Natural killer cell (primary cell): ENCODE measurements at regions of chr1 and their contacts with region 1.

Region 1: GRCh38 chr1:154558575-154559465 is at the start of gene UBE2Q1:
- DNase-seq: peak; percentile 99 to 100
- ATAC-seq: peak; percentile 86 to 94 (median 90)
- H3K4me3 ChIP-seq: peak within 1 kb of the TSS; percentile 78
- H3K4me3 Mint-ChIP-seq: peak within 1 kb of the TSS; percentile 92
- H3K27ac ChIP-seq: peak within 1 kb of the TSS; percentile 84
- H3K27ac Mint-ChIP-seq: peak within 1 kb of the TSS; percentile 83 to 97
- H3K4me1 ChIP-seq: peaks cover 28% of the 10 kb centered on the region
- H3K4me1 Mint-ChIP-seq: peaks cover 38 to 48% of the 10 kb centered on the region in 2 donors
- H3K27me3 ChIP-seq: no peaks in the 10 kb centered on the region
- H3K27me3 Mint-ChIP-seq: no peaks in the 10 kb centered on the region
- CTCF ChIP-seq: no peak
- total RNA-seq, gene UBE2Q1: 100 to 137 (median 112) TPM

Region 2: GRCh38 chr1:154304664-154305337 is 254.0 kb before region 1 on chr1:
- intact Hi-C with region 1: no loop called
- DNase-seq: no peak
- ATAC-seq: no peak
- H3K4me3 ChIP-seq: no peak overlapping the region
- H3K4me3 Mint-ChIP-seq: no peak overlapping the region
- H3K27ac ChIP-seq: no peak overlapping the region
- H3K27ac Mint-ChIP-seq: no peak overlapping the region
- H3K4me1 ChIP-seq: no peaks in the 10 kb centered on the region
- H3K4me1 Mint-ChIP-seq: no peaks in the 10 kb centered on the region
- H3K27me3 ChIP-seq: no peaks in the 10 kb centered on the region
- H3K27me3 Mint-ChIP-seq: peaks cover 0 to 2% of the 10 kb centered on the region in 2 donors
- CTCF ChIP-seq: no peak

Region 3: GRCh38 chr1:154607609-154608396 is 49.0 kb after region 1 on chr1 and contains the start of gene ADAR:
- intact Hi-C with region 1: loop called (anchors 1 kb)
- DNase-seq: peak; percentile 84 to 97
- ATAC-seq: peak; percentile 89 to 95 (median 90)
- H3K4me3 ChIP-seq: peak within 1 kb of the TSS; percentile 77
- H3K4me3 Mint-ChIP-seq: peak within 1 kb of the TSS; percentile 89
- H3K27ac ChIP-seq: peak within 1 kb of the TSS; percentile 91
- H3K27ac Mint-ChIP-seq: peak within 1 kb of the TSS; percentile 87 to 95
- H3K4me1 ChIP-seq: peaks cover 47% of the 10 kb centered on the region
- H3K4me1 Mint-ChIP-seq: peaks cover 48 to 64% of the 10 kb centered on the region in 2 donors
- H3K27me3 ChIP-seq: no peaks in the 10 kb centered on the region
- H3K27me3 Mint-ChIP-seq: no peaks in the 10 kb centered on the region
- CTCF ChIP-seq: no peak
- total RNA-seq, gene ADAR: 260 to 281 (median 265) TPM

Region 4: GRCh38 chr1:154635162-154635561 is 76.3 kb after region 1 on chr1:
- intact Hi-C with region 1: no loop called
- DNase-seq: no peak
- ATAC-seq: no peak
- H3K4me3 ChIP-seq: no peak overlapping the region
- H3K4me3 Mint-ChIP-seq: no peak overlapping the region
- H3K27ac ChIP-seq: no peak overlapping the region
- H3K27ac Mint-ChIP-seq: no peak overlapping the region
- H3K4me1 ChIP-seq: no peaks in the 10 kb centered on the region
- H3K4me1 Mint-ChIP-seq: no peaks in the 10 kb centered on the region
- H3K27me3 ChIP-seq: peaks cover 7% of the 10 kb centered on the region
- H3K27me3 Mint-ChIP-seq: peaks cover 48 to 60% of the 10 kb centered on the region in 2 donors
- CTCF ChIP-seq: no peak

Region 5: GRCh38 chr1:154760469-154760933 is 201.7 kb after region 1 on chr1:
- intact Hi-C with region 1: loop called (anchors 1 kb)
- DNase-seq: peak; percentile 74 to 90
- ATAC-seq: peak; percentile 89 to 98 (median 94)
- H3K4me3 ChIP-seq: no peak overlapping the region
- H3K4me3 Mint-ChIP-seq: no peak overlapping the region
- H3K27ac ChIP-seq: no peak overlapping the region
- H3K27ac Mint-ChIP-seq: no peak overlapping the region
- H3K4me1 ChIP-seq: peaks cover 8% of the 10 kb centered on the region
- H3K4me1 Mint-ChIP-seq: peaks cover 0 to 5% of the 10 kb centered on the region in 2 donors
- H3K27me3 ChIP-seq: peaks cover 28% of the 10 kb centered on the region
- H3K27me3 Mint-ChIP-seq: peaks cover 38 to 60% of the 10 kb centered on the region in 2 donors
- CTCF ChIP-seq: peak; percentile 92

Region 6: DNA sequence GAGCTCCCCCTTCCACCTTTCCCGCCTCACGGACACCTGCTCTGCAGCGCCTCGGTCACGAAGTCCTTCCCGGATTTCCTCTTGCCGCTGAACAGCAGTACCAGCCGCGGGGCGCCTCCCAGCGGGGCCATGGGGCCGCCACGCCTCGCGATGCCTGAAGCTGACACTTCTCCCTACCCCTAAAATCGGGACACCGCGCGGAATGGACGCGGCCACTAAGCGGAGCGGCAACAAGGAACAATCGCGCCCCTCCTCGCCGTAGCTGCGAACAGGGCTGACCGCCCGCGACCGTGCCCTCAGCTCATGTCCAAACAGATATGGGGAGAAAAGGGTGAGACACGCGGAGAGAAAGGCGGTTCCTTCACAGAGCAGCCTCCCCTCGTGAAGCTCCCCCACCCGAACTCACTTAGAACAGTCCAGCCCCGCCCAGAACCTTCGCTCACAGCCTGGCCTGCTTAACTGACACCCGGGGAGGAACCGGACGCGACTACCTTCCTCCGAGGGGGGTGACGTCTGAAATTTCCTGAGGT is 377.8 kb after region 1 on chr1 and contains the start of gene PMVK:
- intact Hi-C with region 1: loop called (anchors 5 kb)
- DNase-seq: peak; percentile 91 to 98
- ATAC-seq: peak; percentile 86 to 97 (median 87)
- H3K4me3 ChIP-seq: peak within 1 kb of the TSS; percentile 85
- H3K4me3 Mint-ChIP-seq: peak within 1 kb of the TSS; percentile 100
- H3K27ac ChIP-seq: peak within 1 kb of the TSS; percentile 97
- H3K27ac Mint-ChIP-seq: peak within 1 kb of the TSS; percentile 99 to 100
- H3K4me1 ChIP-seq: peaks cover 36% of the 10 kb centered on the region
- H3K4me1 Mint-ChIP-seq: peaks cover 19 to 40% of the 10 kb centered on the region in 2 donors
- H3K27me3 ChIP-seq: no peaks in the 10 kb centered on the region
- H3K27me3 Mint-ChIP-seq: no peaks in the 10 kb centered on the region
- CTCF ChIP-seq: no peak
- total RNA-seq, gene PMVK: 9.0 to 12.1 (median 11.0) TPM

Region 7: GRCh38 chr1:155001675-155002463 is 443.0 kb after region 1 on chr1:
- intact Hi-C with region 1: loop called (anchors 5 kb)
- DNase-seq: peak; percentile 97 to 98
- ATAC-seq: peak; percentile 80 to 93 (median 89)
- H3K4me3 ChIP-seq: peak overlapping the region; percentile 75
- H3K4me3 Mint-ChIP-seq: peak overlapping the region; percentile 95
- H3K27ac ChIP-seq: peak overlapping the region; percentile 94
- H3K27ac Mint-ChIP-seq: peak overlapping the region; percentile 82 to 92
- H3K4me1 ChIP-seq: peaks cover 78% of the 10 kb centered on the region
- H3K4me1 Mint-ChIP-seq: peaks cover 30 to 66% of the 10 kb centered on the region in 2 donors
- H3K27me3 ChIP-seq: no peaks in the 10 kb centered on the region
- H3K27me3 Mint-ChIP-seq: no peaks in the 10 kb centered on the region
- CTCF ChIP-seq: no peak

Region 8: GRCh38 chr1:155063550-155064110 is 504.8 kb after region 1 on chr1 and contains the start of gene EFNA4:
- intact Hi-C with region 1: loop called (anchors 2 kb)
- DNase-seq: peak; percentile 76 to 92
- ATAC-seq: peak; percentile 79 to 90 (median 83)
- H3K4me3 ChIP-seq: peak within 1 kb of the TSS; percentile 57
- H3K4me3 Mint-ChIP-seq: peak within 1 kb of the TSS; percentile 92
- H3K27ac ChIP-seq: peak within 1 kb of the TSS; percentile 20
- H3K27ac Mint-ChIP-seq: peak within 1 kb of the TSS; percentile 71 to 80
- H3K4me1 ChIP-seq: peaks cover 33% of the 10 kb centered on the region
- H3K4me1 Mint-ChIP-seq: peaks cover 19 to 40% of the 10 kb centered on the region in 2 donors
- H3K27me3 ChIP-seq: no peaks in the 10 kb centered on the region
- H3K27me3 Mint-ChIP-seq: peaks cover 0 to 2% of the 10 kb centered on the region in 2 donors
- CTCF ChIP-seq: no peak
- total RNA-seq, gene EFNA4: 4.6 to 6.8 (median 5.5) TPM

Region 9: GRCh38 chr1:155562581-155563376 is 1004.0 kb after region 1 on chr1 and contains the start of gene ASH1L:
- intact Hi-C with region 1: loop called (anchors 5 kb)
- DNase-seq: peak; percentile 91 to 94
- ATAC-seq: peak; percentile 76 to 90 (median 80)
- H3K4me3 ChIP-seq: peak within 1 kb of the TSS; percentile 75
- H3K4me3 Mint-ChIP-seq: peak within 1 kb of the TSS; percentile 99
- H3K27ac ChIP-seq: peak within 1 kb of the TSS; percentile 99
- H3K27ac Mint-ChIP-seq: peak within 1 kb of the TSS; percentile 96 to 99
- H3K4me1 ChIP-seq: peaks cover 27% of the 10 kb centered on the region
- H3K4me1 Mint-ChIP-seq: peaks cover 31 to 49% of the 10 kb centered on the region in 2 donors
- H3K27me3 ChIP-seq: no peaks in the 10 kb centered on the region
- H3K27me3 Mint-ChIP-seq: no peaks in the 10 kb centered on the region
- CTCF ChIP-seq: no peak
- total RNA-seq, gene ASH1L: 82.2 to 99.5 (median 91.9) TPM